ENCODE measurements at regions of chr2 and their contacts with region 1.

Region 1: GRCh38 chr2:100984892-100985379 is 17.2 kb upstream of the RPL31 start:
- DNase-seq: peak; percentile 86
- H3K4me3 Mint-ChIP-seq: no peak overlapping the region
- H3K27ac Mint-ChIP-seq: no peak overlapping the region
- H3K4me1 Mint-ChIP-seq: no peaks in the 10 kb centered on the region
- H3K27me3 Mint-ChIP-seq: no peaks in the 10 kb centered on the region

Region 2: GRCh38 chr2:100730346-100730745 is 254.6 kb before region 1 on chr2:
- CTCF ChIA-PET with region 1: interaction called, 16 read pairs
- DNase-seq: peak; percentile 74
- H3K4me3 Mint-ChIP-seq: no peak overlapping the region
- H3K27ac Mint-ChIP-seq: no peak overlapping the region
- H3K4me1 Mint-ChIP-seq: no peaks in the 10 kb centered on the region
- H3K27me3 Mint-ChIP-seq: peaks cover 21% of the 10 kb centered on the region

Region 3: GRCh38 chr2:101793277-101793969 is 808.5 kb after region 1 on chr2:
- CTCF ChIA-PET with region 1: no interaction called
- DNase-seq: no peak
- H3K4me3 Mint-ChIP-seq: no peak overlapping the region
- H3K27ac Mint-ChIP-seq: no peak overlapping the region
- H3K4me1 Mint-ChIP-seq: peaks cover 7% of the 10 kb centered on the region
- H3K27me3 Mint-ChIP-seq: no peaks in the 10 kb centered on the region

Measured in activated naive CD4-positive, alpha-beta T cell treated with anti-CD3 and anti-CD28 coated beads, Interleukin-2, amount 10 ng/mL, durations not matched to agents 7 days and 5 days (primary cell).